Activated naive CD4-positive, alpha-beta T cell treated with anti-CD3 and anti-CD28 coated beads for 36 hours (primary cell): ENCODE measurements at regions of chr11 and their contacts with region 1.

Region 1: GRCh38 chr11:8964324-8965320 is at the start of gene TMEM9B:
- DNase-seq: peak; percentile 84
- H3K4me3 Mint-ChIP-seq: peak within 1 kb of the TSS; percentile 98
- H3K27ac Mint-ChIP-seq: peak within 1 kb of the TSS; percentile 88
- H3K4me1 Mint-ChIP-seq: peaks cover 28% of the 10 kb centered on the region
- H3K27me3 Mint-ChIP-seq: no peaks in the 10 kb centered on the region
- total RNA-seq, gene TMEM9B: 13.4 to 13.6 TPM

Region 2: DNA sequence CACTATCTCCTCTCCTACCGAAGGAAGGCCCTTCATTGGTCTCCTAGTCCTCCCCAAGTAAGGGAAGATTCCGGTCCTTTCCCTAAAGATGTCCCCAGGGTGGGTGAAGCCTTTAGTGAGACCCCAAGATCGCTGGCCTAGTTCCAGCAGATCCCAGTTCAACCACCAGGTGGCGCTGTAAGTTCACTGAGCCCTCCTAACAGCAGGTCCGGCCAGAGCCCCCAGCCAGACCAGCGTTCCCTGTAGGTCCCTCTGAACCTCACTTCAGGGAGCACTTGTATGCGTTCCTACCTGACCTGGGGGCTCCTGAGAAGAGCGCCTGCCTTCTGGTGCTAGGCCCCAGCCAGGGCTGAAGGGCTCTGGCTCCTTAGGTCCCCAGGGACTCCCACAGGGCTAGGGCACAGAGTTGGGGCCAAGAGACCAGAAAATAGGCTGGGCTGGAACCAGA is 739.0 kb before region 1 on chr11:
- CTCF ChIA-PET with region 1: no interaction called
- intact Hi-C with region 1: loop called (anchors 2 kb)
- DNase-seq: peak; percentile 75
- H3K4me3 Mint-ChIP-seq: no peak overlapping the region
- H3K27ac Mint-ChIP-seq: no peak overlapping the region
- H3K4me1 Mint-ChIP-seq: no peaks in the 10 kb centered on the region
- H3K27me3 Mint-ChIP-seq: no peaks in the 10 kb centered on the region

Region 3: GRCh38 chr11:8566613-8567210 is 397.9 kb before region 1 on chr11:
- CTCF ChIA-PET with region 1: no interaction called
- intact Hi-C with region 1: loop called (anchors 10 kb)
- DNase-seq: no peak
- H3K4me3 Mint-ChIP-seq: no peak overlapping the region
- H3K27ac Mint-ChIP-seq: no peak overlapping the region
- H3K4me1 Mint-ChIP-seq: peaks cover 5% of the 10 kb centered on the region
- H3K27me3 Mint-ChIP-seq: peaks cover 21% of the 10 kb centered on the region

Region 4: DNA sequence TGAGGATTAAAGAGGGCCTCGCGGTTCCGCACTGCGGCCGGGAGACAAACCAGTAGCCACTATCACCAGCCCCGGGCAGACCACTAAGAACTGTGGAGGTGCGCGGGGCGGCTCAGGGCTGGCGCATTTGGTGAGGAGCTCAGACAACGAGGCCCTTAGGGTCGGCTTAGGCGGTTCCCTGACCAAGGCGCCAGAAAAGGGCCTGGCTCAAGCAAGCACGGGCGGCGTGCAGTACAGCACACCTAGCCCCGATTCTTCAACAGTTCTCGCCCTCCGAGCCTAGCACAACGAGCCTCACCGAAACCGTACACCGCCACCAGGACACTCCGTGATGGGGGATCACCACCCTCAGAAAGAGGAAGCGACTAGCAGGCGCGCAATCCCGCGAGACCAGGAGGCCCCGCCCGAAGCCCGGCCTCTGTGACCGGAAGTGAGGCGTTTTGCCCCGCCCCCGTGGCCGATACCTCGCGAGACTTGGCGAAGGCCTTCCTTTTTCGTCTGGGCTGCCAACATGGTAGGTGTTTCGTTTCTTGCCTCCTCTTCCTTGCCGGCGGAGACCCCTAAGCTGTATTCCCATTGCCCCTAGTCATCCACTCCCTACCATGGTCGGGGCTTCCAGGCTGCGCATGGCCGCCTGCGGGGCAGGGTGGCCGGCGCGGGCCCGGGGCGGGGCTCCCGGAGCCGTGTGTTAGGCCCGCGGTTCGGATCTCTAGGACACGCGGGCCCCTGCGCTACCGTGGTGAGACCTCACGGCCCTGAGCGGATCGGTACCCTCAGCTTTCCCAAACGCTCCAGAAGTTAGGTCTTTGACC is 282.1 kb before region 1 on chr11 and contains the starts of genes RPL27A and TRIM66:
- CTCF ChIA-PET with region 1: interaction called, 4 read pairs
- intact Hi-C with region 1: loop called (anchors 1 kb)
- DNase-seq: peak; percentile 99
- H3K4me3 Mint-ChIP-seq: peak within 1 kb of the TSS; percentile 91
- H3K27ac Mint-ChIP-seq: peak within 1 kb of the TSS; percentile 92
- H3K4me1 Mint-ChIP-seq: peaks cover 42% of the 10 kb centered on the region
- H3K27me3 Mint-ChIP-seq: no peaks in the 10 kb centered on the region
- total RNA-seq, gene RPL27A: 1,157 to 1,188 TPM
- total RNA-seq, gene TRIM66: 16.4 to 19.1 TPM

Region 5: DNA sequence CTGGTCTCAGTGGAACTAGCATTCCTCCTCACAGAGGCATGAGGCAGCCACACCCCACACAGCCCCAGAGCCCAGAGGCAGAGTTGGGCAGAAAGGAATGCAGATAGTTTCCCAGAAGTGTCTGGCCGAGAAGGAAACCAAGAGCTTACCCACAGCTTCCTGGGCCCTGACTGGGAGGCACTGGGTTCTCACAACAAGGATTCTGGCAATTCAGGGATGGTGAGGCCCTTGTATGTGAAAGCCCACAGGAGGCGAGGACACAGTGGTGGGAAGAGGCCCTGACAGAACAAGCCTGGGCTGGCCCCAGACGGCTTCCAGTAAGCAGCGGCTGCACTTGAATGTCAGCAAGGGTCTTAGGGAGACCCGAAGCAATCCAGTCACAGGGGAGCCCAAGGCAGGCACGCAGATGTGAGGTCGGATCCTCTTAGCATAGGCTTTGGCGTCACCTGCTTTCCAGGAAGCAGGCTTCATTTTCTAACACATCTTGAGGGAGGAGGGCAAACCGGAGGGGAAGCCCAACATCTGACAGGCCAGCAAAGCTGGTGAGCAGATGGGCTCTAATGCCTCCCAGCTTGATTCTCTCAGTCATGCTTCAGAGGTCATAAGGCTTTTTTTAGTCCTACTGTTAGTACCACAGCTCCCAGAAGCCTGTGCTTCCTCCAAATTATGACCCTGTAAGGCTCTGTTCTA is 131.9 kb before region 1 on chr11:
- CTCF ChIA-PET with region 1: no interaction called
- intact Hi-C with region 1: loop called (anchors 5 kb)
- DNase-seq: peak; percentile 63
- H3K4me3 Mint-ChIP-seq: no peak overlapping the region
- H3K27ac Mint-ChIP-seq: peak overlapping the region; percentile 27
- H3K4me1 Mint-ChIP-seq: peaks cover 8% of the 10 kb centered on the region
- H3K27me3 Mint-ChIP-seq: peaks cover 10% of the 10 kb centered on the region

Region 6: DNA sequence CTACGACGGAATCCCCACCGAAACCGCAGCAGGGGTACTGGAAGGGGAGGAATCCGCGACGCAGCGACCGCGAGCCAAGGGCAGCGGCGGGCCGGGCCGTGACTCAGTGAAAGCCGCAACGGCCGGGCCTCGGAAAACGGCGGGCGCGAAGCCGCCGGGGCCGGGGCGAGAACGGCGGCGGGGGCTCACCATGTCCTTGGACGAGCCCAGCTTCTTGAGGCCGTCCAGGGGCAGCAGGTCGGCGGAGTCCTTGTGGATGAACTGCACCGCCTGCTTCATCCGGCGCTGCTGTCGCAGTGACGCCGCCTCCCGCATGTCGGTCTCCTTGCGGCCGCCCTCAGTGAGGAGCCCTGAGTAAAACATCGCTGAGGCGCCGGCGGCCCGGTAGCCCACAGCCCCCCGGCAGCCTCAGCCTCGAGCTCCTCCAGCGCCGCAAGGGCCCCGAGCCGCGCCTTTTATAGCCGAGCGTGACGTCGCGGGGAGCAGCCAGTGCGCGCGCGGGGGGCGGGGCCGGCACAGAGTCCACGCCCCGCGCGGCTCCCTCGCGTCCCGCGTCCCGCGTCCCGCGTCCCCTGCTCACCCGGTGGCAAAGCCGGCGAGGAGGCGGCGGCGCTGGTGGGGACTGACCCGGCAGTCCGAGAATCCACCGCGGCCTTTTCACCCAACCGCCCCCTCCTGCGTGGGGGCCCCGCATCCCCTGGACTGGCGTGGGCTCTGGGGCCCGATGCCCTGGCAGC is 39.1 kb after region 1 on chr11 and contains the start of gene NRIP3:
- CTCF ChIA-PET with region 1: interaction called, 3 read pairs
- intact Hi-C with region 1: loop called (anchors 1 kb)
- DNase-seq: peak; percentile 67
- H3K4me3 Mint-ChIP-seq: peak within 1 kb of the TSS; percentile 68
- H3K27ac Mint-ChIP-seq: no peak within 1 kb of the TSS
- H3K4me1 Mint-ChIP-seq: peaks cover 24% of the 10 kb centered on the region
- H3K27me3 Mint-ChIP-seq: peaks cover 33% of the 10 kb centered on the region
- total RNA-seq, gene NRIP3: 3.0 to 3.5 TPM